ENCODE measurements at regions of chr1 and their contacts with region 1.

Region 1: DNA sequence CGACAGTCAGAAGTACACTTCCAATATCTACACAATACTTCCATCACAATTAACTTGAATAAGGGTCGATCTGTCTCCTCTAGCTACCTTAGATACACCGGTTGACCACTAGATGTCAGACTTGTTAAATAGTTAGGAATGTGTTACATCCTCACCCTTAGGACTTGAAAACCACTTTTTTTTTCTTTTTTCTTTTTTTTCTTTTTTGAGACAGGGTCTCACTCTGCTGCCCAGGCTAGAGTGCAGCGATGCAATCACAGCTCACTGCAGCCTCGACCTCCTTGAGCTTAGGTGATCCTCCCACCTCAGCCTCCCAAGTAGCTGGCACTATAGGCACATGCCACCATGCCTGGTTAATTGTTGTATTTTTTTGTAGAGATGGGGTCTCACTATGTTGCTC is 120.4 kb upstream of the GREM2 start:
- DNase-seq: no peak
- H3K4me3 ChIP-seq: no peak overlapping the region
- CTCF ChIP-seq: peak; percentile 55

Region 2: DNA sequence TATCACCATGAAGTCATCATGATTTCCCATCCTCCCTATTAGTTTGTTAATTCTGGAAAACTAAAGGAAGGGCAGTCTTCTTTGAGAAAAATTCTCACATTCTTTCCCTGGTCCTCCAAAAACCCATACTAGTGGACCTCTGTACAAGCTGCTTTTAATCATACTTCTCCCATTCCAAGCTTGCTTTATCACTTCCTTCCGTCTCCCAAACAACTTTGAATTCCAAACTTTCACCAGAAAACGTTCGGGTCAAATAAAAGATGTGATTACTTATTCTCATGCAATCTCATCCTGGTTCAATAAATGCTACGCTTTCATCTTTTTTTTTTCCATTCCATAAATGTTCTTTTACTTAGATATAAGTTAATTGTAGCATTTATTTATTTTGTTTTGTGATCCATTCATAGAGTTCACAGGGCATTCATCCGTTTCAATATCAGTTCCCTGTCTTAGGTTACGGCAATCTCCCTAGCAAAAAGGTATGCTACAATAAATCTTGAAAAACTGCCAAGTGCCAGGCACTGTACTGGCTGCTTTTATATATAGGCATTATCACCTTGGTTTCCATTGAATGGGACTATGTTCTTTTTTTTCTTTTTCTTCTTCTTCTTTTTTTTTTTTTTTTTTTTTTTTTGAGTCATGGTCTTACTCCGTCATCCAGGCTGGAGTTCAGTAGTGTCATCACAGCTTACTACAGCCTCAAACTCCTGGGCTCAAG is 20.2 kb before region 1 on chr1:
- CTCF ChIA-PET with region 1: interaction called, 10 read pairs
- POLR2A ChIA-PET with region 1: no interaction called
- DNase-seq: peak; percentile 24
- H3K4me3 ChIP-seq: no peak overlapping the region
- CTCF ChIP-seq: no peak

Region 3: GRCh38 chr1:240720976-240721375 is 11.4 kb before region 1 on chr1:
- CTCF ChIA-PET with region 1: interaction called, 17 read pairs
- POLR2A ChIA-PET with region 1: no interaction called
- DNase-seq: no peak
- H3K4me3 ChIP-seq: no peak overlapping the region
- CTCF ChIP-seq: no peak

Region 4: DNA sequence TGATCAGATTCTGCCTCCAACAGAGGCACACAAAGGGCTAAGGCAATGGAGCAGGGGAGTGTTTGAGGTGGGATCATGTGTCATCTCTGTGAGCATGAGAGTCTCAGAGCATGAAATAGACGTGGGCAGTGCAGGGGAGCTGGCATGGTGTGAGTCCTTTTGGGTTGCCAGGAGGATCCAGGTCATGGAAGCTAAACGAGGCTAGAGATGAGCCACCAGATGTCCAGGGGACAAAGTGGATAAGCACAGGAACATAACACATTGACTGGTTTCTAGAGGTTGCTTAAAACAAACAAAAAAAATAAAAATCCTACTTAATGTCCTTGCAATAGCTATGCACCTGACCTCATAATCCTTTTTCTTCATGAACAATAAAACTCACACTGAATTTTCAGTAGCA is 134.3 kb after region 1 on chr1:
- CTCF ChIA-PET with region 1: no interaction called
- POLR2A ChIA-PET with region 1: no interaction called
- DNase-seq: no peak
- H3K4me3 ChIP-seq: no peak overlapping the region
- CTCF ChIP-seq: no peak

Region 5: GRCh38 chr1:240941701-240942370 is 209.4 kb after region 1 on chr1:
- CTCF ChIA-PET with region 1: interaction called, 192 read pairs
- POLR2A ChIA-PET with region 1: no interaction called
- DNase-seq: no peak
- H3K4me3 ChIP-seq: no peak overlapping the region
- CTCF ChIP-seq: no peak

Region 6: DNA sequence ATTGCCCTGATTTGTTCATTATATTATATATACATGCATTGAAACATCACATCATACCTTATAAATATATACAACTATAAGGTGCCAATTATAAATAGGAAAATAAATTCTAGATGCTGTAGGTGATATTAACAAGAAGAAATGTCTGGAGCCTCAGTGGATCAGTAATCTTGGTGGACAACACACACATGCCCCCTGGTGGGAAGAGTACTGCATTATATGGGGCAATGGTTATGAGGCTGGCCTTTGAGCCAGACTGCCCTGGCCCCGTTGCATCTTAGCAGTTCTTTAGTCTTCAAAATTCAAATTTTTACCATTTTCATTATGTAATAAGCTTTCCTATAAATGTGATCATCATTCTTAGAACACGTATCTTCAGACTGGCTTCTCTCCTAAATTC is 214.5 kb after region 1 on chr1:
- CTCF ChIA-PET with region 1: interaction called, 192 read pairs
- POLR2A ChIA-PET with region 1: no interaction called
- DNase-seq: peak; percentile 9
- H3K4me3 ChIP-seq: no peak overlapping the region
- CTCF ChIP-seq: peak; percentile 68

Region 7: GRCh38 chr1:240956020-240956419 is 223.6 kb after region 1 on chr1:
- CTCF ChIA-PET with region 1: interaction called, 192 read pairs
- POLR2A ChIA-PET with region 1: no interaction called
- DNase-seq: no peak
- H3K4me3 ChIP-seq: no peak overlapping the region
- CTCF ChIP-seq: no peak

Region 8: GRCh38 chr1:241499910-241500309 is 767.5 kb after region 1 on chr1:
- CTCF ChIA-PET with region 1: interaction called, 17 read pairs
- POLR2A ChIA-PET with region 1: no interaction called
- DNase-seq: no peak
- H3K4me3 ChIP-seq: no peak overlapping the region
- CTCF ChIP-seq: peak; percentile 58